ENCODE measurements at regions of chr3 and their contacts with region 1.

Region 1: GRCh38 chr3:123642182-123642956 is 57.5 kb upstream of the HACD2 start:
- DNase-seq: peak; percentile 86
- H3K4me3 ChIP-seq: no peak overlapping the region
- H3K27ac ChIP-seq: no peak overlapping the region
- H3K27me3 ChIP-seq: no peaks in the 10 kb centered on the region
- CTCF ChIP-seq: peak; percentile 89

Region 2: GRCh38 chr3:123618768-123619484 is 23.4 kb before region 1 on chr3:
- CTCF ChIA-PET with region 1: interaction called, 23 read pairs
- POLR2A ChIA-PET with region 1: interaction called, 4 read pairs
- DNase-seq: peak; percentile 39
- H3K4me3 ChIP-seq: peak overlapping the region; percentile 82
- H3K27ac ChIP-seq: peak overlapping the region; percentile 39
- H3K27me3 ChIP-seq: no peaks in the 10 kb centered on the region
- CTCF ChIP-seq: no peak

Region 3: GRCh38 chr3:123652346-123652984 is 10.1 kb after region 1 on chr3:
- CTCF ChIA-PET with region 1: interaction called, 112 read pairs
- POLR2A ChIA-PET with region 1: no interaction called
- DNase-seq: no peak
- H3K4me3 ChIP-seq: no peak overlapping the region
- H3K27ac ChIP-seq: peak overlapping the region; percentile 94
- H3K27me3 ChIP-seq: no peaks in the 10 kb centered on the region
- CTCF ChIP-seq: peak; percentile 88

Region 4: GRCh38 chr3:123682781-123683504 is 40.6 kb after region 1 on chr3:
- CTCF ChIA-PET with region 1: interaction called, 11 read pairs
- POLR2A ChIA-PET with region 1: no interaction called
- DNase-seq: no peak
- H3K4me3 ChIP-seq: no peak overlapping the region
- H3K27ac ChIP-seq: no peak overlapping the region
- H3K27me3 ChIP-seq: no peaks in the 10 kb centered on the region
- CTCF ChIP-seq: no peak

Region 5: GRCh38 chr3:123700791-123701722 is 58.7 kb after region 1 on chr3:
- CTCF ChIA-PET with region 1: interaction called, 14 read pairs
- POLR2A ChIA-PET with region 1: no interaction called
- DNase-seq: no peak
- H3K4me3 ChIP-seq: peak overlapping the region; percentile 49
- H3K27ac ChIP-seq: no peak overlapping the region
- H3K27me3 ChIP-seq: no peaks in the 10 kb centered on the region
- CTCF ChIP-seq: no peak

Region 6: GRCh38 chr3:123723522-123724168 is 81.3 kb after region 1 on chr3:
- CTCF ChIA-PET with region 1: interaction called, 24 read pairs
- POLR2A ChIA-PET with region 1: interaction called, 3 read pairs
- DNase-seq: peak; percentile 63
- H3K4me3 ChIP-seq: no peak overlapping the region
- H3K27ac ChIP-seq: peak overlapping the region; percentile 39
- H3K27me3 ChIP-seq: no peaks in the 10 kb centered on the region
- CTCF ChIP-seq: peak; percentile 92

Region 7: GRCh38 chr3:123778991-123779622 is 136.7 kb after region 1 on chr3:
- CTCF ChIA-PET with region 1: no interaction called
- POLR2A ChIA-PET with region 1: no interaction called
- DNase-seq: no peak
- H3K4me3 ChIP-seq: no peak overlapping the region
- H3K27ac ChIP-seq: no peak overlapping the region
- H3K27me3 ChIP-seq: no peaks in the 10 kb centered on the region
- CTCF ChIP-seq: no peak

Region 8: DNA sequence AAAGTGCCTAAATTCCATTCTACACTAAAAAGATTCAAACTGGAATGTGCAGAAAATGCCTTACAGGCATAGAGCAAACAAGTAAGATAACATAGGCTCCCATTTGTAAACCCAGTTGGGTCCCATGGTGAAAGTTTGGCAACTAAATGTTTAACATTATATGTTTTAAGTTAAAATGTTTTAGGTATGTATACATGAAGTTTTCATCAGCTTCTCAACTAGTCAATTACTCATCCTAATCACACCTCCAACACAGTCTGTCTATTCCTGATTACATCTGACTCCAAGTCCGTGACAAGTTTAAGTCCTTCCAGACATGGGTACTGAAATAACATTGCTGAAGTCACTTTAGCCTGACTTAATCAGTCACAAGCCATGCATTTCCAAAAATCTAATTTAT is 216.8 kb after region 1 on chr3:
- CTCF ChIA-PET with region 1: no interaction called
- POLR2A ChIA-PET with region 1: no interaction called
- DNase-seq: no peak
- H3K4me3 ChIP-seq: no peak overlapping the region
- H3K27ac ChIP-seq: no peak overlapping the region
- H3K27me3 ChIP-seq: no peaks in the 10 kb centered on the region
- CTCF ChIP-seq: no peak